Mammary epithelial cell (primary cell): ENCODE measurements at regions of chr12 and their contacts with region 1.

Region 1: GRCh38 chr12:46933947-46934346 is 108.2 kb upstream of the SLC38A4 start:
- DNase-seq: peak; percentile 52
- H3K4me3 ChIP-seq: no peak overlapping the region
- H3K27ac ChIP-seq: no peak overlapping the region
- H3K4me1 ChIP-seq: peaks cover 8% of the 10 kb centered on the region
- H3K27me3 ChIP-seq: no peaks in the 10 kb centered on the region
- CTCF ChIP-seq: peak; percentile 70 to 75

Region 2: GRCh38 chr12:46071769-46072624 is 862.0 kb before region 1 on chr12:
- CTCF ChIA-PET with region 1: no interaction called
- dilution Hi-C with region 1: no loop called
- in situ Hi-C with region 1: no loop called
- intact Hi-C with region 1: loop called (anchors 1 kb)
- DNase-seq: peak; percentile 70
- H3K4me3 ChIP-seq: no peak overlapping the region
- H3K27ac ChIP-seq: peak overlapping the region; percentile 15
- H3K4me1 ChIP-seq: peaks cover 24% of the 10 kb centered on the region
- H3K27me3 ChIP-seq: no peaks in the 10 kb centered on the region
- CTCF ChIP-seq: peak; percentile 100

Region 3: DNA sequence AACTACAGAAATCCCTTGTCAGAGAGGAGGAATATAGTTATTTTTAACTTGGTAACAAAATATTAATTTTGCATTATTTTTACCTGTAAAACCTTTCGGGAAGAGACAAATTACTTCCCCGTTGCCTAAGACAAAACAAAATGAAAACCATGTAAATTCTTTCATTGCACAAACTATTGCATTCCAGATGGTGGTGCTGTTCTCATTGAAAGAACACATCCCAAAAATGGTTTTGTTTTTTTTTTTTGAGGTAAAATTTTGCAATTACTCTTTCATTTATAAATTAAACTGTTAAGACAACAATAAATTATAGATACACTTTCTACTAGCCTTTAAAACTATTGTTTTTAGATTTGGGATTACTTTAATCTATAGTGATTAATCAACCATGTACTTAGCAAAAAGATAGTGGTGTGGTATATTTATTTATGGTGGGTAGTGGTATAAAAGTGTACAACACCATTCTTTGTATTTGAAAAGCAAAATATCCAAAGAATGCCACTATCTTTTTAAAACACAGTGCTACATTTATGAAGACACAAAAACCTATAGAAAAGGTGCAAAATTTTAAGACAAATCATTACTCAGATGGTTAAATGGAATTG is 780.6 kb before region 1 on chr12:
- CTCF ChIA-PET with region 1: no interaction called
- dilution Hi-C with region 1: no loop called
- in situ Hi-C with region 1: loop called in 1 of 2 experiments (anchors 25 kb)
- intact Hi-C with region 1: loop called (anchors 1 kb)
- DNase-seq: no peak
- H3K4me3 ChIP-seq: peak overlapping the region in 1 of 3 experiments; percentile 17
- H3K27ac ChIP-seq: no peak overlapping the region
- H3K4me1 ChIP-seq: peaks cover 11% of the 10 kb centered on the region
- H3K27me3 ChIP-seq: no peaks in the 10 kb centered on the region
- CTCF ChIP-seq: peak; percentile 67 to 77

Region 4: DNA sequence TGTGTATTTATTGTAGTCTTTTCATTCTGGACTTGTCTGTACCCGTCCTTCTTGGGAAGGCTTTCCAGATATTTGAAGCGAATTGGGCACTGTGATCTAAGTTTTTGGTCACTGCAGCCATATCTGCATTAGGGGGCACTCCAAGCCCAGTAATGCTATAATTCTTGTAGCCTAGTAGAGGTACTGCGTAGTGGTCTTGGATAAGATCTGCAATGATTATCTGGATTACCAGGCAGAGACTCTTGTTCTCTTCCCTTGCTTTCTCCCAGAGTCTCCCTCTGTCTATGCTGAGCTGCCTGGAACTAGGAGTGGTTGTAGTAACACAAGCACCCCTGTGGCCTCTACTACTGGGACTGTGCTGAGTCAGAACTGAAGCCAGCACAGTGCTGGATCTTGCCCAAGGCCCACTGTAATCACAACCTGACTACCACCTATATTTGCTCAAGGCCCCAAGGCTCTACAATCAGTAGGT is 591.3 kb before region 1 on chr12:
- CTCF ChIA-PET with region 1: no interaction called
- dilution Hi-C with region 1: no loop called
- in situ Hi-C with region 1: no loop called
- intact Hi-C with region 1: loop called (anchors 1 kb)
- DNase-seq: peak; percentile 69
- H3K4me3 ChIP-seq: no peak overlapping the region
- H3K27ac ChIP-seq: no peak overlapping the region
- H3K4me1 ChIP-seq: peaks cover 13% of the 10 kb centered on the region
- H3K27me3 ChIP-seq: no peaks in the 10 kb centered on the region
- CTCF ChIP-seq: peak; percentile 34 to 52

Region 5: GRCh38 chr12:46442239-46442638 is 491.7 kb before region 1 on chr12:
- CTCF ChIA-PET with region 1: no interaction called
- dilution Hi-C with region 1: no loop called
- in situ Hi-C with region 1: no loop called
- intact Hi-C with region 1: loop called (anchors 10 kb)
- DNase-seq: peak; percentile 73
- H3K4me3 ChIP-seq: peak overlapping the region in 2 of 3 experiments; percentile 7 to 10
- H3K27ac ChIP-seq: peak overlapping the region; percentile 96
- H3K4me1 ChIP-seq: peaks cover 60% of the 10 kb centered on the region
- H3K27me3 ChIP-seq: no peaks in the 10 kb centered on the region
- CTCF ChIP-seq: no peak

Region 6: DNA sequence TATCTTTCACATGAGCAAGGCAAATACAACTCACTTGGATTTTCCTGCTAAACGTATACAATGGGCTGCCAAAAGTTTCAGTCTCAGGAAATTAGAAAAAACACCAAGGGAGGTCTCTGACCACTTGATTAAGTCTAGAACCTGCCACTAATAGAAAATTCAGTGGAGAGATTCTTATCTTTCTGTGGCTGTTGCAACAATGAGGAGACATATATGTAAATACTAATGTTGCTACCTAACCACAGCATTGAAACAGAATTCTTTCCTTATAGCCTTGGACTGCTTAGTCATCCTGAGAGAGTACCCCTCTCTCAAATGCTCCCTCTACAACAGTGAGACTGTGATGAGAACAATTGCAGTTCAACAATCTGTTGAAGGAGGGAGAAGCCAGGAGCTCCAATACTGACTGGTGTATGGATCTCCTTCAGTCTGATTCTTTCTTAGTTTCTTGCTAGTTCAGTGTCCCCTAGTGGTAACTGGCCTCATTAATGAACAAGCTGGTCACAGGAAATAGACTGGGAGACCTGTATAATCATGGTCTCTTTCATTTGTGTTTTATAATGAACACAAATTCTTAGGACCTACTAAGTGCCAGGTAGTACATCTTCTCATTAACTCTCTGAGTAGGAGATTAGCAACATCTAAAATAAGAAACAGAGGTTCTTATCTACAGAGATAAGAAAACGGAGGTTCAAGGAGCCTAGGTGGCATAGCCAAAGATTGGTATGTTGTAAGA is 272.7 kb before region 1 on chr12:
- CTCF ChIA-PET with region 1: no interaction called
- dilution Hi-C with region 1: no loop called
- in situ Hi-C with region 1: loop called in 1 of 2 experiments (anchors 10 kb)
- intact Hi-C with region 1: no loop called
- DNase-seq: peak; percentile 75
- H3K4me3 ChIP-seq: no peak overlapping the region
- H3K27ac ChIP-seq: peak overlapping the region; percentile 64
- H3K4me1 ChIP-seq: peaks cover 55% of the 10 kb centered on the region
- H3K27me3 ChIP-seq: no peaks in the 10 kb centered on the region
- CTCF ChIP-seq: peak; percentile 80 to 86